GM10248 (cell line): ENCODE measurements at regions of chr11 and their contacts with region 1.

Region 1: GRCh38 chr11:33303541-33303940 is 46.4 kb downstream of the HIPK3 start:
- DNase-seq: no peak
- CTCF ChIP-seq: no peak

Region 2: DNA sequence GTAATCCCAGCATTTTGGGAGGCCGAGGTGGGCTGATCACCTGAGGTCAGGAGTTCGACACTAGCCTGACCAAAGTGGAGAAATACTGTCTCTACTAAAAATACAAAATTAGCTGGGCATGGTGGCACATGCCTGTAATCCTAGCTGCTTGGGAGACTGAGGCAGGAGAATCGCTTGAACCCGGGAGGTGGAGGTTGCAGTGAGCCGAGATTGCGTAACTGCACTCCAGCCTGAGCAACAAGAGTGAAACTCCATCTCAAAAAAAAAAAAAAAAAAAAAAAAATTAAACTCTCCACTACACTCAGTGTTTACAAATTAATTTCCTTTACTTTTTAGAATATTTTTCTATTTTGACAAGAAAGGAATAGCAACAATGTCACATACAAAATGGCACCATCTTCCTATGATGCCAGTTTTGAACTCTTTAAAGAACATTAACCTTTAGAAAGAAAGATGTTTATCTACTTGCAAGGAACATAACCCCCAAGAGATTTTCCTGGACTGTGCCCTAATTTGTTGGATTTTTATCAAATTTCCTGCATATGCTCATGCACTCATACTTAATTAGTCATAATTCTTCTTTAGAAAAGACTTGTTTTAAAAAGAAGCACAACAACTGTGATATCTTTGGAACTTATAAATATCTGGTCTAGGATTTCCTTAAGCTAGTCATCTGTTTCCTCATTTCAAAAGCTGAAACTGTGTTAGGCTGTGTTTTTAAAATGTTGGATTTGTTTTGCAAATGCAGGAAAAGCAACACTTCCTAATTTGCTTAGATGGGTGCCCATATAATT is 68.9 kb before region 1 on chr11:
- CTCF ChIA-PET with region 1: no interaction called
- POLR2A ChIA-PET with region 1: no interaction called
- DNase-seq: no peak
- CTCF ChIP-seq: no peak

Region 3: GRCh38 chr11:33273656-33274055 is 29.9 kb before region 1 on chr11:
- CTCF ChIA-PET with region 1: no interaction called
- POLR2A ChIA-PET with region 1: no interaction called
- DNase-seq: no peak
- CTCF ChIP-seq: no peak

Region 4: GRCh38 chr11:33291004-33291777 is 12.3 kb before region 1 on chr11:
- CTCF ChIA-PET with region 1: interaction called, 10 read pairs
- POLR2A ChIA-PET with region 1: no interaction called
- DNase-seq: peak; percentile 58
- CTCF ChIP-seq: no peak

Region 5: GRCh38 chr11:33557201-33557600 is 253.7 kb after region 1 on chr11:
- CTCF ChIA-PET with region 1: no interaction called
- POLR2A ChIA-PET with region 1: no interaction called
- DNase-seq: no peak
- CTCF ChIP-seq: no peak